GM10248 (cell line): ENCODE measurements at regions of chr3 and their contacts with region 1.

Region 1: DNA sequence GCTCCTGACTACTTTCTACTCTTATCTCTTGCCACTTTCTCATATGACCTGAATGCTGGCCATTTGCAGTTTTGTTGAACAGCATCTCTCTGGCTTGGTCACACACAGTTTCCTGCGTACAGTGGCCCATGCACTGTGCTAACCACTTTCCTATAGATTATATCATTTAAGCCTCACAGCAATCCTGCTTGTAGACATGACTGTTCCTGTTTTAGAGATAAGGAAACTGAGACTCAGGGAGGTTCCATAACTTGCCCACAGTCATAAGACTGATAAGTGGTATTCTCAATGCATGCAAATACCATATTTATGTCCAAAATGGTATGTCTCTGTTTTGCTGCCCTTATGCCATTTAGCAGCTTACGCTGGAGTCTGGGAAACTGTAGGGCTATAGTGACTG is 229.5 kb downstream of the NR1D2 start:
- DNase-seq: no peak
- CTCF ChIP-seq: no peak

Region 2: DNA sequence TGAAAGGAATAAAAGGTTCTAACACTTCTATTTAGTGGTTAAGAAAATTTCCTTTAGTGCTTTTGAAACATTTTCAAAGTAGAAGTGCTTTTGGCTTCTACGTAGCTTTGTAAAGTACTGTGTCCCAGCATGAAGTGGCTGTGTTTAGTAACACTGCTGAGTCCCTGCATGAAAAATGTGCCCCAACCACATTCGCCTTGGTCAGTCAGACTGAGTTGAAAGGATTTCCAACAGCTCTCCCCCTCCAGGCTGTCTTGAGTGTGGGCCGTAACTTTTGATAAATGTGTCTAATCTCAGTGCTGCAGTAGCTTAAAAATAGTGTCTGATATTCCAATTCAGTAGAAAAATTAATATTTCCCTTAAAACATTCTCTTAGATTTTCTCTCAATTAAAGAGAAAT is 114.6 kb before region 1 on chr3:
- CTCF ChIA-PET with region 1: no interaction called
- POLR2A ChIA-PET with region 1: no interaction called
- DNase-seq: no peak
- CTCF ChIP-seq: no peak

Region 3: GRCh38 chr3:24185738-24186384 is 11.2 kb after region 1 on chr3:
- CTCF ChIA-PET with region 1: interaction called, 20 read pairs
- POLR2A ChIA-PET with region 1: no interaction called
- DNase-seq: peak; percentile 32
- CTCF ChIP-seq: peak; percentile 56

Region 4: DNA sequence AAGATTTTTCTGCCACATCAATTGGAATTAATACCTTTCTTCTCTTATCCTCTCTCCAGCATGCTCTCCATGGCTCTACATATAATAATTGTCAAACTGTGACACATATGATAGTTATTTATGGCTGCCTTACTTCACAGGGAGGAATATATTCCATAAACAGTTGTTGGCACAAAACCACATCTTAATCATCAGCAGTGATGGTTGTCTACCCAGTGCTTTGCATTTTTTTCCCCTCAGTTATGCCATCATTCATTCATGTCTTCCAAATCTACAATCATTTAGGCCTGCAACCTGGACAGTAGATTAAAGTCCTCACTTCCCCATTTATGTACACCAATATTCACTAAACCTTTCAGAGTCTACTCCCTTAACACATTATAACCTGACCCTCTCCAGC is 212.4 kb after region 1 on chr3:
- CTCF ChIA-PET with region 1: no interaction called
- POLR2A ChIA-PET with region 1: no interaction called
- DNase-seq: no peak
- CTCF ChIP-seq: no peak